Breast epithelium (tissue), 4 donors: ENCODE measurements at regions of chr11 and their contacts with region 1.

Region 1: DNA sequence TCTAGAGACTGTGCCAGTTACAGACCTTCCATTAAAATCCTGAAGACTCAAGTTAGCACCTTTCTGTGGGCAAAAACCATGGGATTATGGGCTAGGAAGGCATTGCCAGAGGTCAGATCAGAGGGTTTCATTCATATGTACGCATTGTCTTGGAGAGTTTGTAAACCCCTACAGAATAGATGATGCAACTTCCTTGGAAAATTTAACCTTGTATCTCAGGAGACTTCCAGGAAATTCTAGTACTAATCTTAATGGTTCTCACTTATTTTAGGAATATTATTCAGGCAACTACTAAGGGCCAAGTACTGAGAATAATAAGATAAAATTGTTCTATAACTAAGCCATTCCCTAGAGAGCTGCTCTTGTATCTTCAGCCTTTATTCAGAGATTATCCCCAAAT is 6.9 kb downstream of the OLFML1 start:
- DNase-seq: no peak
- H3K4me3 ChIP-seq: no peak overlapping the region
- H3K27ac ChIP-seq: no peak overlapping the region
- H3K4me1 ChIP-seq: no peaks in the 10 kb centered on the region
- H3K27me3 ChIP-seq: no peaks in the 10 kb centered on the region
- CTCF ChIP-seq: no peak
- POLR2A ChIP-seq: no peak

Region 2: DNA sequence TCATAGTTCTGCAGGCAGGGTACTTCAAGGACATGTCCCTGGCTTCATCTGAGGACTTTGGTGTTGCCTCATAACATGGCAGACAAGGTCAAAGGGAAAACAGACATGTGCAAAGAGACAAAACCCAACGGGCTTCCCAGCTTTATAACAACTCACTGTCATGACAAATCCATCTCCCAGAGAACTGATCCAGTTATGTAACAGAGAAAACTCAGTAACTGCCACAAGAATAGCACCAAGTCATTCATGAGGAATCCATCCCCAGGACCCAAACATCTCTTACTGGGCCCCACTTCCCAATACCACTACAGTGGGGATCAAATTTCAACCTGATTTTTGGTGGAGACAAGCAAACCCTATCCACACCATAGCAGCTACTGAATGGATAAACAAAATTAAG is 1725.2 kb before region 1 on chr11:
- intact Hi-C with region 1: no loop called
- DNase-seq: no peak
- H3K4me3 ChIP-seq: no peak overlapping the region
- H3K27ac ChIP-seq: no peak overlapping the region
- H3K4me1 ChIP-seq: no peaks in the 10 kb centered on the region
- H3K27me3 ChIP-seq: no peaks in the 10 kb centered on the region
- CTCF ChIP-seq: no peak
- POLR2A ChIP-seq: no peak

Region 3: DNA sequence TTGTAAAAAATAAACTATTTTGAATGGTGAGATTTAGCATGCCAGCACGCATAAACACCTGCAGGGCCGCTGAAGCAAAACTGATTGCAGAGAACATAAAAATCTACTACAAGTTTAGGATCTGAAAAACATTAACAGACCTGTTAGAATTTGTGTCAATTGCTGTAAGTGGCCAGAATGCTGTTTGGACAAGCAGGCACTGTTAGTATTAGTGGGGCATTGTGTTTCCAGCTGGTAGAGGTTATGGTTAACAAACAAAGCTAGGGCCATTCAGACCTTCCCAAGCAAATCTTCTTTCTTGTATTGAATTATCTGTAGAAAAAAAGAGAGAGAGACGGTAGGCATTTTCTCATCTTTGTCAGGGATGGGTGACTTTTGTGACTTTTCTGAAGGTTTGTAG is 64.5 kb before region 1 on chr11:
- intact Hi-C with region 1: loop called (anchors 2 kb)
- DNase-seq: no peak
- H3K4me3 ChIP-seq: no peak overlapping the region
- H3K27ac ChIP-seq: no peak overlapping the region
- H3K4me1 ChIP-seq: no peaks in the 10 kb centered on the region
- H3K27me3 ChIP-seq: no peaks in the 10 kb centered on the region
- CTCF ChIP-seq: no peak
- POLR2A ChIP-seq: no peak

Region 4: DNA sequence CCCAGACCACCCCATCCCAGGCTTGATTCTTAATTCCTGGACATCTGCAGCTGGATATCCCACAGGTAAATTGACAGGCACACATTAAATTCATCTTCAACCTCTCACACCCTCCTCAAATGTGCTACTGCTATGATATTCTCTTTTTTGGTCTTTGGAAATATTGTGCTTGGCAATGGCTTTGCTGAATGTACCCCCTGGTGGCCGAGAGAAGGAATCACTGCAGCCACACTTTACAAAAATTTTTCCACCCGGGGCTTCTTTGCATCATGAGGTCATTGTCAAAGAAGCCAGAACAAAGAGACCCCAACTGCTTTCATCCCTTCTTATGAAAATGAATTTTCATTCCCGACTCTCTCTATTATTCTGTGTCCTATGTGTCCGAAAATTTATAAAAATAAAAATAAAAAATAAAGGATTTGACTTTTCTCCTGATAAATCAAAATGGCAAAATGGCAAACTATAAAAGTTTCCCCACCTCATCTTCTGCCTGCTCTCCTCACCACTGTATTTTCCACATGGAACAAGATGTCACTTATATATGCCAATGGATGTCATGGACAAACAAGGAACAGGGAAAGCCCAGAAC is 196.1 kb after region 1 on chr11:
- intact Hi-C with region 1: no loop called
- DNase-seq: no peak
- H3K4me3 ChIP-seq: no peak overlapping the region
- H3K27ac ChIP-seq: no peak overlapping the region
- H3K4me1 ChIP-seq: no peaks in the 10 kb centered on the region
- H3K27me3 ChIP-seq: no peaks in the 10 kb centered on the region
- CTCF ChIP-seq: peak in 2 of 3 donors; percentile 71 to 77
- POLR2A ChIP-seq: no peak

Region 5: GRCh38 chr11:7858006-7858405 is 365.8 kb after region 1 on chr11:
- intact Hi-C with region 1: no loop called
- DNase-seq: no peak
- H3K4me3 ChIP-seq: no peak overlapping the region
- H3K27ac ChIP-seq: no peak overlapping the region
- H3K4me1 ChIP-seq: no peaks in the 10 kb centered on the region
- H3K27me3 ChIP-seq: no peaks in the 10 kb centered on the region
- CTCF ChIP-seq: no peak
- POLR2A ChIP-seq: no peak

Region 6: GRCh38 chr11:8201644-8202365 is 709.6 kb after region 1 on chr11:
- intact Hi-C with region 1: no loop called
- DNase-seq: no peak
- H3K4me3 ChIP-seq: no peak overlapping the region
- H3K27ac ChIP-seq: no peak overlapping the region
- H3K4me1 ChIP-seq: no peaks in the 10 kb centered on the region
- H3K27me3 ChIP-seq: peaks cover 0 to 9% of the 10 kb centered on the region in 2 donors
- CTCF ChIP-seq: no peak
- POLR2A ChIP-seq: no peak